ENCODE measurements at regions of chr2 and their contacts with region 1.

Region 1: DNA sequence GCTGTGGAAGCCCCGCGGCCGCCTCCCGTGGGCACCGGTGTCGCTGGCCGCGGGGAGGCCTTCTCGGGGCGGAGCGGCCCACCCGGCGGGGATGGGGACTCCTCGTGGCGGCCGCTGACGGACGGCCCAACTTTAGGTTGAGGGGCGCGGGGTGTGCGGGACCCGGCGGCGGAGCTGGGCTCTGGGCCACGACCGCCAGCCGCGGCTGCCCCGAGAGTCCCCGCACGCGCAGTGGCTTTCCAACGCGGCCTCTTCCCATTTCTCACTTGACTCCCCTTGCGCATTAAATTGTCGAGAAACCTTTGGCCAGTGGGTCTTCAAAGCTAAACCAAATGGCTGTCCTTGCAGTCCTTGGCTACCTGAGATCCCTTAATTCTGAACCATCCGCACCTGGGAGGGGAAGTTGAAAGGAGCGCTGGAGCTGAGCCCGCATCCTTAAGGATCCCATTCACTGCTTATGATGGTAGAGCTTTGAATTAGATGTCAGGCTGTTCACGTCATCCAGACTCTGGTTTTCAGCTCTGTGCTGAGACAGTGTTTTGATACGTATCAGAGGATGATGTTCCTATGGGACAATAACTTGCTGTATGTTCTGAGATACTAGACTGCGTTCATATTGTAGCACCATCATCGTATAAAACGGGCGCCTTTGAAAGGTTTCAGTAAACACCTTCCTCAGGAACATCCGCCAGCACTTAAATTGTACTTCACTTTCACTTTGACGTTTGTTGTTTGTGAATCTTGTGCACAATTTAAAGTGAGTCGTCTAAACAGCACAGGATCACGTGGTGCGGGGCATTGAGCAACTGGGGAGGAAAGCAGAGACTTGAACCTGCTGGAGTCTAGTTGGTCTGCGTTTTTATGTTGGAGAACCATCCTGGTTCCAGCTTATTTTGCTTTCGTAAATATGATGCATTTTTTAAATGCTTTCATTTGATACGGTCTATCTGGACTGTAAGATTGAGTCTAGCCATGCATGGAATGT is 874 bp downstream of the CLIP4 start:
- DNase-seq: peak; percentile 74 to 90 (median 78)
- H3K4me3 ChIP-seq: peak overlapping the region; percentile 83 to 88
- H3K4me3 Mint-ChIP-seq: peak overlapping the region; percentile 86 to 97 (median 94)
- H3K27ac ChIP-seq: peak overlapping the region; percentile 78
- H3K27ac Mint-ChIP-seq: peak overlapping the region; percentile 93 to 98 (median 96)
- H3K4me1 ChIP-seq: peaks cover 43% of the 10 kb centered on the region
- H3K4me1 Mint-ChIP-seq: peaks cover 33 to 60% (median 44%) of the 10 kb centered on the region in 4 donors
- H3K27me3 ChIP-seq: no peaks in the 10 kb centered on the region
- H3K27me3 Mint-ChIP-seq: no peaks in the 10 kb centered on the region

Region 2: DNA sequence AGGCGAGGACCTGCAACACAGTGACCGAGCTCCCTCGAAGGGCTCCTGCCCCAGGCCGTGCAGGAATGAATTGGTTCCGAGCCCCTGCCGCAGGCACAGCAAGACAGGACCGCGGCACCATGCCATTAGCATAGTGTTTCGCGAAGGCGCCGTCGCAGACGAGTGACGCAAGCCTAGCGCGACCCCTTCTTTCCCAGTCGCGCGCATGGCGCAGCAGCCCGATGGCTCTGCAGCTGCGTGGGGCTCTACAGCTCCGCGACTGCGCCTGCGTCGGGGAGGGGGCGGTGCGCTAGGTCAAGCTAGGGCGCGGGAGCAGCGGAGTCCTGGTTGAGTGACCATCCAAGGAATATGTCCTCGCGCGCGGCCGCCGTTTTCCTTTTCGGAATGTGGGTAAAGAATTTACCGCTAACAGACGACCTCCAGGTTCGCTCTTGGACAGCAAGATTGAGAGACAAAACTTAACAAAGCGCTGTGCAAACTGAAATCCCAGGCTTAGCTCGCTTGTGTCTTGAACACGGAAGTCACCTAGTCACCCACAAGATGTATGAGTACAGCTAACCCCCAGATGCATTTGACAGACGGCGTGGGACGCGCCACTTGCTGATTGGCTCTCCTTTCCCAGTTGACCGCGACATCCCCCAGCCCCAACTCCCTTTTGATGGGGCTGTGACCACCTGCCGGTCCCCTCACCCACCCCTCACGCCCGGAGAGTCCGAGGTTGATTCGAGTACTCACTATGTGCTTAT is 245.8 kb before region 1 on chr2 and contains the start of gene TRMT61B:
- CTCF ChIA-PET with region 1: no interaction called
- POLR2A ChIA-PET with region 1: interaction called, 12 read pairs
- intact Hi-C with region 1: no loop called
- DNase-seq: peak; percentile 95 to 96 (median 96)
- H3K4me3 ChIP-seq: peak within 1 kb of the TSS; percentile 99
- H3K4me3 Mint-ChIP-seq: peak within 1 kb of the TSS; percentile 93 to 100 (median 96)
- H3K27ac ChIP-seq: peak within 1 kb of the TSS; percentile 95
- H3K27ac Mint-ChIP-seq: peak within 1 kb of the TSS; percentile 98 to 100 (median 100)
- H3K4me1 ChIP-seq: peaks cover 39% of the 10 kb centered on the region
- H3K4me1 Mint-ChIP-seq: peaks cover 20 to 46% (median 31%) of the 10 kb centered on the region in 4 donors
- H3K27me3 ChIP-seq: no peaks in the 10 kb centered on the region
- H3K27me3 Mint-ChIP-seq: peaks cover 0 to 2% of the 10 kb centered on the region in 2 donors
- total RNA-seq, gene TRMT61B: 17.4 TPM

Region 3: DNA sequence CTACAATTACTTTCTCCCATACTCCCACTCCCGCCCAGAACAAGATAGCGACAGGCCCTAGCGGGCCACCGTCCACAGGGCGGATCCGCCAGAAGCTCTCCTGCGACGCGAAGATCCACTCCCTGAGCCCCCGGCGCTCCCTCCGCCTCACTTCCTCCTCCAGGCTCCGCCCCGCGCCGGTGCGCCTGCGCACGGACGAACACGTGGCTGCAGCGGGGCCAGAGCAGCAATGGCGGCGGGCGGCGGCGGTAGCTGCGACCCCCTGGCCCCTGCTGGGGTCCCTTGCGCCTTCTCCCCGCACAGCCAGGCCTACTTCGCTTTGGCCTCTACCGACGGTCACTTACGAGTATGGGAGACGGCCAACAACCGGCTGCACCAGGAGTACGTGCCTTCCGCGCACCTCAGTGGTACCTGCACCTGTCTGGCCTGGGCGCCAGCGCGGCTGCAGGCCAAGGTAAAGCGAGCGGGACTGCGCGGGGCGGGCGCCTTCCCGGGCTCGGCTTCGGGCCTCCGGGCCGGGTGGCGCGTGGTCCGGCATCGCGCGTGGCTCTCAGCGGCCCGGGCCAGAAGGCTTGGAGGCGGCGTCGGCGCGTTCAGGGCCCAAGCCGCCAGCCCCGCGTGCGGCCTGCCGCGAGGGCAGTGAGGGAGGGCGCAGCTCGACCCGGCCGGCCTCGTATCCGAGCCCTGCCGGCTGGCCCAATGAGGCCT is 221.5 kb before region 1 on chr2 and contains the start of gene WDR43:
- CTCF ChIA-PET with region 1: no interaction called
- POLR2A ChIA-PET with region 1: interaction called, 10 read pairs
- intact Hi-C with region 1: no loop called
- DNase-seq: peak; percentile 97 to 99 (median 98)
- H3K4me3 ChIP-seq: peak within 1 kb of the TSS; percentile 75 to 91
- H3K4me3 Mint-ChIP-seq: peak within 1 kb of the TSS; percentile 91 to 100 (median 96)
- H3K27ac ChIP-seq: peak within 1 kb of the TSS; percentile 83
- H3K27ac Mint-ChIP-seq: peak within 1 kb of the TSS; percentile 88 to 99 (median 95)
- H3K4me1 ChIP-seq: peaks cover 43% of the 10 kb centered on the region
- H3K4me1 Mint-ChIP-seq: peaks cover 33 to 50% (median 40%) of the 10 kb centered on the region in 4 donors
- H3K27me3 ChIP-seq: no peaks in the 10 kb centered on the region
- H3K27me3 Mint-ChIP-seq: peaks cover 0 to 2% of the 10 kb centered on the region in 2 donors
- total RNA-seq, gene WDR43: 52.9 to 57.5 TPM

Region 4: DNA sequence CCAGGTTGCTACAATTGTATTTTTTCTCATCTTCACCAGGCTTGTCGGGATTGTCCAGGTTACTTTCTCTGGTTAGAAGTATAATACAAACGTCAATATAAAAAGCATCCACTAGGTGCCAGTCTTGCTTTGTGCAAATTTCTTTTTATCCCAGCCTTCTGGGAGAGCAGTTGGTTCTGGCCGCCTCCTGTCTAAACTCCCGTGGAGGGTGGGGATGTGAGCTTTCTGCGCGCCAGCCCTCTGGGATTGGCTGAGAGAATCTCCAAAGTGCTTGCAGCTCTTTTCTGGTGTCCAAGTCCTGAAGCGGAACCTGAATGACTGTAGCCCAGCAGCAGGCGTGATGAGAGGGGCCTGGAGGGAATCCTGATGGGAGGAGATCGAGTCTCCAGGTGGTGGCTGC is 157.4 kb before region 1 on chr2:
- CTCF ChIA-PET with region 1: interaction called, 10 read pairs
- POLR2A ChIA-PET with region 1: no interaction called
- intact Hi-C with region 1: loop called (anchors 1 kb)
- DNase-seq: peak in 4 of 5 donors; percentile 51 to 67 (median 64)
- H3K4me3 ChIP-seq: no peak overlapping the region
- H3K4me3 Mint-ChIP-seq: no peak overlapping the region
- H3K27ac ChIP-seq: no peak overlapping the region
- H3K27ac Mint-ChIP-seq: peak overlapping the region in 1 of 7 donors; percentile 7
- H3K4me1 ChIP-seq: peaks cover 10% of the 10 kb centered on the region
- H3K4me1 Mint-ChIP-seq: peaks cover 0 to 10% (median 5%) of the 10 kb centered on the region in 4 donors
- H3K27me3 ChIP-seq: no peaks in the 10 kb centered on the region
- H3K27me3 Mint-ChIP-seq: no peaks in the 10 kb centered on the region

Region 5: GRCh38 chr2:29000481-29000880 is 115.6 kb before region 1 on chr2:
- CTCF ChIA-PET with region 1: interaction called, 4 read pairs
- POLR2A ChIA-PET with region 1: interaction called, 11 read pairs
- intact Hi-C with region 1: no loop called
- DNase-seq: peak; percentile 59 to 71 (median 65)
- H3K4me3 ChIP-seq: no peak overlapping the region
- H3K4me3 Mint-ChIP-seq: peak overlapping the region in 7 of 8 donors; percentile 43 to 83 (median 64)
- H3K27ac ChIP-seq: no peak overlapping the region
- H3K27ac Mint-ChIP-seq: peak overlapping the region; percentile 81 to 99 (median 92)
- H3K4me1 ChIP-seq: peaks cover 23% of the 10 kb centered on the region
- H3K4me1 Mint-ChIP-seq: peaks cover 16 to 36% (median 27%) of the 10 kb centered on the region in 4 donors
- H3K27me3 ChIP-seq: no peaks in the 10 kb centered on the region
- H3K27me3 Mint-ChIP-seq: no peaks in the 10 kb centered on the region

Region 6: DNA sequence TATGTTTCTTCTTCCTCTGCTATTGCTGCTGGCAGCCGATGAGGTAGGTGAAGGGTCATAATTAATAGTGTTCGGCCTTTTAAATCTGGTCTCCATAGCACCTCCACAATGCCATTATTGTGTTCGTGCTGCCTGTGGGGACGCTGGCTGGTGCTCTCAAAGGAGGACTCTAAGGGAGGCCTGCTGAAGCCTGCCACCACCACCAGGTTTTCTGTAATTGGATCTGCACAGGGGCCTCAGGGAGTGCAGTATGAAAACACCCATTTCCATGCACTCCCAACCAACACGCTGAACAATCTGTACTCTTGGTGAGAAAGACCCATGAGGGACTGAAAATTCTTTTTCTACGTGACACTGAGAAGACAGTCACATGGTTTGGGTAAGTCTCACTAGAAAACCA is 18.5 kb before region 1 on chr2:
- CTCF ChIA-PET with region 1: no interaction called
- POLR2A ChIA-PET with region 1: no interaction called
- intact Hi-C with region 1: no loop called
- DNase-seq: no peak
- H3K4me3 ChIP-seq: no peak overlapping the region
- H3K4me3 Mint-ChIP-seq: no peak overlapping the region
- H3K27ac ChIP-seq: no peak overlapping the region
- H3K27ac Mint-ChIP-seq: no peak overlapping the region
- H3K4me1 ChIP-seq: no peaks in the 10 kb centered on the region
- H3K4me1 Mint-ChIP-seq: no peaks in the 10 kb centered on the region
- H3K27me3 ChIP-seq: no peaks in the 10 kb centered on the region
- H3K27me3 Mint-ChIP-seq: peaks cover 1 to 4% of the 10 kb centered on the region in 2 donors

Region 7: GRCh38 chr2:29130295-29130694 is 14.2 kb after region 1 on chr2:
- CTCF ChIA-PET with region 1: interaction called, 3 read pairs
- POLR2A ChIA-PET with region 1: interaction called, 18 read pairs
- intact Hi-C with region 1: no loop called
- DNase-seq: no peak
- H3K4me3 ChIP-seq: no peak overlapping the region
- H3K4me3 Mint-ChIP-seq: no peak overlapping the region
- H3K27ac ChIP-seq: no peak overlapping the region
- H3K27ac Mint-ChIP-seq: peak overlapping the region in 2 of 7 donors; percentile 2 to 56
- H3K4me1 ChIP-seq: no peaks in the 10 kb centered on the region
- H3K4me1 Mint-ChIP-seq: peaks cover 13 to 18% (median 16%) of the 10 kb centered on the region in 4 donors
- H3K27me3 ChIP-seq: no peaks in the 10 kb centered on the region
- H3K27me3 Mint-ChIP-seq: no peaks in the 10 kb centered on the region

Measured in CD4-positive, alpha-beta memory T cell (primary cell).